Aorta (tissue), 5 donors: ENCODE measurements at regions of chr12 and their contacts with region 1.

Region 1: DNA sequence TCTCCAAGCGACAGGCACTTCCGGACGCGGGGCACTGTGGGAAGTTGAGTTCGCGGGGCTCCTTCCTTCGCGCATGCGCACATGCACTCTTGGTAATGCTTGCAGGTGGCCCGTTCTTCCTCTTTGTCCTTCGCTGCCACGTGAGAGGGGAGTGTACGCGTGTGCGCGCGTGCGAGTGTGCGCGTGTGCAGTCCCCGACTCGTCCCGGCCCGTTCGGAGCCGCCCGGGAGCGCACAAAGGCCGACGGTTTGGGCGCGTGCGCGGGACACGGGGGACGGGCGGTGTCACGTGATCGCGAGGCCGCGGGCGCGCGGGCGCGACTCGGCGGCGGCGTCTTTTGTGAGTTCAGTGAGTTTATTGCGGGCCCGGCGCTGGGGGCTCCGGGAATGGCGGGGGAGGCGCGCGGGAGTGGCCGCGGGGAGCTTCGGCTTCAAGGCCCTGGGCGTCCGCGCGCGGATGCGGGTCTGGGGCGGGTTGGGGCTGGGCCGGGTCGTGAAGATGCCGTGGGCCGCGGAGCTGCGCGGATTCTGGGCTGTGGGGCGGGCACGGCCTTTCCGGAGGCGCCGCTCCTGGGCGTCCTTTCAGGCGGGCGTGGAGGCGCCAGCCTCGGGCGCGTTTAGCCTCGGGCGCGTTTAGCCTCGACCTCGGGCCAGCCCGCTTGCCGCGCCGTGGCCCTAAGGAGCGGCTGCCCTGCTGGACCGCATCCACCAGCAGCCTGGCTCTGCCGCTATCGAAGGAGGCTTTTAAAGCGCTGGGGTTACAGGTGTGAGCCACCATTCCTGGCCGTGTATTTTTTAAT is at the start of gene ZNF84:
- DNase-seq: peak; percentile 98
- ATAC-seq: peak; percentile 99
- H3K4me3 ChIP-seq: peak within 1 kb of the TSS; percentile 50 to 88
- H3K27ac ChIP-seq: peak within 1 kb of the TSS in 1 of 2 donors; percentile 85
- H3K4me1 ChIP-seq: no peaks in the 10 kb centered on the region
- H3K27me3 ChIP-seq: no peaks in the 10 kb centered on the region
- total RNA-seq, gene ZNF84: 23.3 to 32.1 TPM

Region 2: DNA sequence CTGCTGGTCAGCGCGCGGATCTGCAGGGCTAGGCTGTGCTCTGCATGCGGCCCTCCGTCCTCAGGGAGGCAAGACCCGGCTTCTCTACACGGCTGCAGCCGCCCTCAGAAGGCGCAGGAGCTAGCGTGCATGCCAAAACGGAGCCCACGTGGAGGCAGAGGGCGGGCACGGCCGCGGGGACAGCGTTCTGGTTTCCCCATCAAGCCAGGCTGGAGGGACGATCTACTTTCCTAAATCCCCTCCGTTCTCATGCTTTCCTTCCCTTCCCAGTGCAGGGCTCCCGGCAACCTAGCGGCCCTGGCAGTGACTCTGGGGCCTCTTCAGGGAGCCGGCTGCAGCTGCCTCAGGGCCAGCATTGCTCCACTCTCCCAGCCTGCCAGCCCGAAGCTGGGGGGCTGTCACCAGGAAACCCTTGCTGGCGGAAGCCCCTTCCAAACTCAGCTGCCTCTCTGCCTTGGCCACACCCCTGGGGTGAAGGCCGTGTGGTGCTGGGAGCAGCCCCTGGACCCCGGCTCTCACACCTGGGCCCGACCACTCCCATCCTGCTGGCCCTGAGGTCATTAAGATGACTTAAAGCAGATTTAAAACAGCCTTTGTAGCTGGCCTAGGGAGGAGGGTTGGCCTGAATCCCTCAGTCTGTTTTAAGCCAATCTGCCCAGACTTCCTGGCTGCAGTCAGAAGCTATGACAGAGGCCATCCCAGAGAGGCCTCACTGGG is 199.6 kb before region 1 on chr12:
- intact Hi-C with region 1: no loop called
- DNase-seq: no peak
- ATAC-seq: peak; percentile 61
- H3K4me3 ChIP-seq: no peak overlapping the region
- H3K27ac ChIP-seq: no peak overlapping the region
- H3K4me1 ChIP-seq: no peaks in the 10 kb centered on the region
- H3K27me3 ChIP-seq: no peaks in the 10 kb centered on the region

Region 3: GRCh38 chr12:132986001-132986912 is 51.1 kb before region 1 on chr12 and contains the start of gene ZNF26:
- intact Hi-C with region 1: loop called (anchors 1 to 10 kb)
- DNase-seq: peak; percentile 94 to 96
- ATAC-seq: peak; percentile 100
- H3K4me3 ChIP-seq: peak within 1 kb of the TSS; percentile 52 to 91
- H3K27ac ChIP-seq: peak within 1 kb of the TSS in 1 of 2 donors; percentile 65
- H3K4me1 ChIP-seq: peaks cover 0 to 5% of the 10 kb centered on the region in 2 donors
- H3K27me3 ChIP-seq: no peaks in the 10 kb centered on the region
- total RNA-seq, gene ZNF26: 10.5 to 16.7 TPM

Region 4: GRCh38 chr12:133023566-133023965 is 13.8 kb before region 1 on chr12:
- intact Hi-C with region 1: no loop called
- DNase-seq: no peak
- ATAC-seq: no peak
- H3K4me3 ChIP-seq: no peak overlapping the region
- H3K27ac ChIP-seq: no peak overlapping the region
- H3K4me1 ChIP-seq: no peaks in the 10 kb centered on the region
- H3K27me3 ChIP-seq: no peaks in the 10 kb centered on the region

Region 5: GRCh38 chr12:133130038-133130807 is 92.8 kb after region 1 on chr12 and contains the starts of genes ZNF10 and ZNF891:
- intact Hi-C with region 1: loop called in 1 of 2 experiments (anchors 2 kb)
- DNase-seq: peak; percentile 97 to 99
- ATAC-seq: peak; percentile 98
- H3K4me3 ChIP-seq: peak within 1 kb of the TSS; percentile 83 to 87
- H3K27ac ChIP-seq: peak within 1 kb of the TSS; percentile 47 to 80
- H3K4me1 ChIP-seq: peaks cover 0 to 2% of the 10 kb centered on the region in 2 donors
- H3K27me3 ChIP-seq: no peaks in the 10 kb centered on the region
- total RNA-seq, gene ZNF10: 14.8 to 16.2 TPM
- total RNA-seq, gene ZNF891: 3.5 to 4.9 TPM